ENCODE measurements at regions of chr14 and their contacts with region 1.

Region 1: GRCh38 chr14:40806471-40806870 is 800.2 kb upstream of the LRFN5 start:
- DNase-seq: no peak
- H3K4me3 ChIP-seq: no peak overlapping the region
- H3K27ac ChIP-seq: no peak overlapping the region
- H3K4me1 ChIP-seq: no peaks in the 10 kb centered on the region
- H3K27me3 ChIP-seq: no peaks in the 10 kb centered on the region
- CTCF ChIP-seq: no peak
- POLR2A ChIP-seq: no peak

Region 2: DNA sequence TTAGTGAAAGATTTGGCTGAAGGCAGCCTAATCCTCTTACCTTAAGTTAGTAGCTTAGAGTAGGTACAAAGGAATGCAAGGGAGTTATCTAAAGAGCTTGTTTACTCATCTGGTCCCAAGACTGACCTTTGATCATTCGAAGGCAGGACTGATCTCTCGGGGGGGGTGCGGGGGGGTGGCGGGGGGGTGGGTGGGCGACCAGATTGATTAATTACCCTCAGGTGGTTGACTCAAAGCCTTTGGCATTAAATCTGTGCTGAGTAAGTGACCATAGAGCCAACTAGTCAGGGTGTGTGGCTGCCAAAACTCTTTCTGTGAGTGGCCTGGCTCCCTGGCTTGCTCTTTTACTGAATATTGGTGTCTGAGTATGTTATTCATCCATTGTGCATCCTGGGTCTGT is 642.4 kb before region 1 on chr14:
- intact Hi-C with region 1: no loop called
- DNase-seq: no peak
- H3K4me3 ChIP-seq: no peak overlapping the region
- H3K27ac ChIP-seq: no peak overlapping the region
- H3K4me1 ChIP-seq: no peaks in the 10 kb centered on the region
- H3K27me3 ChIP-seq: no peaks in the 10 kb centered on the region
- CTCF ChIP-seq: no peak
- POLR2A ChIP-seq: no peak

Region 3: GRCh38 chr14:40870252-40870651 is 63.8 kb after region 1 on chr14:
- intact Hi-C with region 1: loop called (anchors 10 kb)
- DNase-seq: no peak
- H3K4me3 ChIP-seq: no peak overlapping the region
- H3K27ac ChIP-seq: no peak overlapping the region
- H3K4me1 ChIP-seq: no peaks in the 10 kb centered on the region
- H3K27me3 ChIP-seq: no peaks in the 10 kb centered on the region
- CTCF ChIP-seq: no peak
- POLR2A ChIP-seq: no peak